Activated naive CD4-positive, alpha-beta T cell treated with anti-CD3 and anti-CD28 coated beads, Interleukin-2, amount 10 ng/mL, durations not matched to agents 7 days and 5 days (primary cell): ENCODE measurements at regions of chr3 and their contacts with region 1.

Region 1: DNA sequence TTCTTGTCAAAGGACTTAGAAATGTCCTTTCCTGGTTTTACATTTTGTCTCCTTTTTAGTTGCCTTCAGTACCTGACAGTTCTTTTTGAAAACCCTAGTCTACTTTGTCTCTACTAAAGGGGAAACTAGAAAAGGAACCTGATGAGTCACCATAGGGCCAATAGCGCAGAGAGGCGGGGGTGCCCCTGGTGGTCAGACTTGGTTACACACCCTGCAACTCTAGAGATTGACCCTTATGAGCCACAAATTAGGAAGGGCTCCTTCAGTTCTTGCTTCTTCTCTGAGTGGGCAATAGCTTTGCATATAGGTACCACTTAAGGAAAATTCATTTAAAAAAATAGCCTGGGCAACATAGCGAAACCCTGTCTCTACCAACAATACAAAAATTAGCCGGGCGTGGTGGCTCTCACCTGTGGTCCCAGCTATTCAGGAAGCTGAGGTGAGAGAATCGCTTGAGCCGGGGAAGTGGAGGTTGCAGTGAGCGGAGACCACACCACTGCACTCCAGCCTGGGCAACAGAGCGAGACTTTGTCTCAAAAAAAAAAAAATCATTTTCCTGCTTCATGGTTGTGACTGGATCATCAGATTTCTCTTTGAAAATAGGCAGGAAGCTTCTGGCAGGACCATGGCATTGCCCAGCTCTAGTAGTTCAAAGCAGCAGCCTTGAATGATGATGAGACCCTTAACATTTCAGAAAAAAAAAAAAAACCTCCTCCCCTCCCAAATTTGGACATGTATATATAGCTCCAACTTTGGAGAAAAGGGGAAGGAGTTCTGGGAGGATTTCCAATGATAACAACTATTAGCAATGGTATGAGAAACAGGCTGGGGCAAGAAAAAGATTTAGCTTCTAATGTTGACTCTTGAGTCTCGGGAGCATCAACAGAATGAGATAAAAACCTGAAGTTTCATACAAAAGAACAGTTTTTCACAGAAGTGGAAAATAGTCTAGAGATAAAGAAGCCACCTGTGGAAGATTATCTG is 45.2 kb upstream of the RASA2 start:
- DNase-seq: peak; percentile 79
- H3K4me3 Mint-ChIP-seq: no peak overlapping the region
- H3K27ac Mint-ChIP-seq: no peak overlapping the region
- H3K4me1 Mint-ChIP-seq: peaks cover 22% of the 10 kb centered on the region
- H3K27me3 Mint-ChIP-seq: no peaks in the 10 kb centered on the region

Region 2: DNA sequence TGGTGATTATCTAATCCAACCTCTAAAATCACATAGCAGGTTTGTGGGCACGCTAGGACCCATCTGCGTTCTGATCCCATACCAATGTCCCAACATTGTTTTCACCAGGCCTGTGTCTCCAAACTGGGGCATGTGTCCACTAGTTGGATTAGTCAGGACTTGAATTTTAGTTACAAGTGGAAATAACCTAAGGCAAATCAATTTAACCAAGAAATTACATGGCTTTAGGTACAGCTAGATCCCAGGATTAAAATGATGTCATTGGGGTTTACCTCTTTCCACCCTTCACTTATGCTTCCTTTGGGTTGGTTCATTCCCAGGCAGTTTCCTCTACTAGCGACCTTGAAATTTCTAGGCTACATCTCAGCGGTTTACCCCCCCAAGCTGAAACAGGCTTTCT is 257.2 kb before region 1 on chr3:
- CTCF ChIA-PET with region 1: no interaction called
- DNase-seq: no peak
- H3K4me3 Mint-ChIP-seq: no peak overlapping the region
- H3K27ac Mint-ChIP-seq: no peak overlapping the region
- H3K4me1 Mint-ChIP-seq: no peaks in the 10 kb centered on the region
- H3K27me3 Mint-ChIP-seq: peaks cover 20% of the 10 kb centered on the region

Region 3: DNA sequence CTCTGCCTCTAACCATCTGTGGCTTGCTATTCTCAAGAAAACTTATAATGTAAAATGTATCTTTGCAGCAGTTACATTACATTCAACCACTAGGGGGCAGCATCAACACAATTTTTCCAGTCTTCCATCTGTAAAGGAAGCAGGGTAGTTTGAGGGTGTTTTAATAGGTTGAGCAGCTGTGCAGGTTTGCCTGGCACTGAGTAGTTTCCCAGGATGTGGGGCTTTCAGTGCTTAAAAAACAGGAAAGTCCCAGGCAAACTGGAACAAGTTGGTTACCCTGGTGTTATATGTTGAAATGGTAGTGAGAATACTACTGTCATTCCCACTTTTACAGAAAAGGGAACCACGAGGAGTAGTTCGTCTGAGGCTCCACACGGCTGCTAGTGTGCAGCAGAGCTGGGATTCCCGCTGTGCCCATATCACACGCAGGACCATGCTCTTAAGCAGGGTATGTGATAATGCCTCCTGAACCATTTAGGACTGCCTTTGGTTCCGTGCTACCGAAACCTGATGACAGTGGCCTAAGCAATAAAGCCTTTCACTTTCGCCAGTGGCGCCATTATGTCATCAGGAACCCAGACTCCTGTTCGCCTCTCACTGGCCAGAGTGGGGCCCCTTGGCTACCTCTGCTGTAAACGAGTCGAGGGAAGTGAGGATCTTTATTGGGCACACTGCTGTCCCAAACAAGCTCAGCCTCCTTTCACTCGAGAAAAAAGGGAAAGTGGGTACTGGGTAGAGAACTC is 138.0 kb before region 1 on chr3:
- CTCF ChIA-PET with region 1: interaction called, 15 read pairs
- DNase-seq: peak; percentile 71
- H3K4me3 Mint-ChIP-seq: no peak overlapping the region
- H3K27ac Mint-ChIP-seq: no peak overlapping the region
- H3K4me1 Mint-ChIP-seq: peaks cover 58% of the 10 kb centered on the region
- H3K27me3 Mint-ChIP-seq: peaks cover 3% of the 10 kb centered on the region

Region 4: GRCh38 chr3:141311496-141312353 is 129.9 kb before region 1 on chr3:
- CTCF ChIA-PET with region 1: interaction called, 33 read pairs
- DNase-seq: peak; percentile 99
- H3K4me3 Mint-ChIP-seq: peak overlapping the region; percentile 96
- H3K27ac Mint-ChIP-seq: peak overlapping the region; percentile 97
- H3K4me1 Mint-ChIP-seq: peaks cover 64% of the 10 kb centered on the region
- H3K27me3 Mint-ChIP-seq: no peaks in the 10 kb centered on the region

Region 5: GRCh38 chr3:141370065-141370533 is 71.6 kb before region 1 on chr3:
- CTCF ChIA-PET with region 1: interaction called, 29 read pairs
- DNase-seq: peak; percentile 63
- H3K4me3 Mint-ChIP-seq: no peak overlapping the region
- H3K27ac Mint-ChIP-seq: no peak overlapping the region
- H3K4me1 Mint-ChIP-seq: peaks cover 8% of the 10 kb centered on the region
- H3K27me3 Mint-ChIP-seq: peaks cover 8% of the 10 kb centered on the region

Region 6: GRCh38 chr3:141412087-141412935 is 29.4 kb before region 1 on chr3:
- CTCF ChIA-PET with region 1: interaction called, 10 read pairs
- DNase-seq: peak; percentile 70
- H3K4me3 Mint-ChIP-seq: peak overlapping the region; percentile 66
- H3K27ac Mint-ChIP-seq: peak overlapping the region; percentile 98
- H3K4me1 Mint-ChIP-seq: peaks cover 63% of the 10 kb centered on the region
- H3K27me3 Mint-ChIP-seq: no peaks in the 10 kb centered on the region

Region 7: GRCh38 chr3:141452036-141452435 is 10.4 kb after region 1 on chr3:
- CTCF ChIA-PET with region 1: interaction called, 50 read pairs
- DNase-seq: peak; percentile 71
- H3K4me3 Mint-ChIP-seq: no peak overlapping the region
- H3K27ac Mint-ChIP-seq: no peak overlapping the region
- H3K4me1 Mint-ChIP-seq: peaks cover 8% of the 10 kb centered on the region
- H3K27me3 Mint-ChIP-seq: peaks cover 4% of the 10 kb centered on the region